Ovary (tissue), 10 donors: ENCODE measurements at regions of chr15 and their contacts with region 1.

Region 1: DNA sequence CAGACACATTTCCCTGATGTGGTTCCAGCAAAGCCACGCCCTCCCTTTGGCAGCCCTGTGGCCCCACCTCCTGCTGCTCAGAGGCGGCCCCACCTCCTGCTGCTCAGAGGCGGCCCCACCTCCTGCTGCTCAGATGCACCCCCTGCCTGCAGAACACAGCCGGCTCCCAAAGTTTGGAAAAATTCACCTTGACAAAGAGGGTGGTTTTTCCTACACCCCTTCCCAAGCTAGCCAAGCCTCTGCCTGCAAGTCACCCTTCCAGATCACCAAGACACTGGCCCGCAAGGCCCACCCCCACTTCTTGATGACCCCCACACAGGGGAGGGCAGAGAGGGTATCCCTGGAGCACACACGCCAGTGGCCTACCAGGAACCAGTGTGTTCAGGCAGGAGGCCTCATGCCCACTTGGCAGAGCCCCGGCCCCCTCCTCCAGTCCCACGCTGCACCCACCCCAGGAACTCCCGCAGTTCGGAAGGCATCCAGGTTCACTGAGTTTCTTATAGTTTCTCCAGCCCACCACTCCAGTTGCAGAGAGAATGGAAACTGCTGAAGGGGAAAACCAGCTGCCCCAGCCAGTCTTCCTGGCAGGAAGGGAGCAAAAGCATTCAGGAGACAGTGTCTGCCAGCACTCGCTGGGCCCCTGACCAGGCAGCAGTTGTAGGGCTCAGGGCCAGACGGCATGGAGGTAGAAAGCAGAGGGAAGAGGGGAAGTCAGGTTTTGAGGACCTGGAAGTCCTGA is 2.3 kb upstream of the HAPLN3 start:
- DNase-seq: peak; percentile 81 to 95 (median 88)
- H3K4me3 ChIP-seq: no peak overlapping the region
- H3K27ac ChIP-seq: peak overlapping the region; percentile 21 to 55
- H3K4me1 ChIP-seq: peaks cover 9% of the 10 kb centered on the region
- H3K27me3 ChIP-seq: no peaks in the 10 kb centered on the region
- CTCF ChIP-seq: peak; percentile 68 to 77 (median 76)
- EP300 ChIP-seq: no peak
- POLR2A ChIP-seq: no peak

Region 2: DNA sequence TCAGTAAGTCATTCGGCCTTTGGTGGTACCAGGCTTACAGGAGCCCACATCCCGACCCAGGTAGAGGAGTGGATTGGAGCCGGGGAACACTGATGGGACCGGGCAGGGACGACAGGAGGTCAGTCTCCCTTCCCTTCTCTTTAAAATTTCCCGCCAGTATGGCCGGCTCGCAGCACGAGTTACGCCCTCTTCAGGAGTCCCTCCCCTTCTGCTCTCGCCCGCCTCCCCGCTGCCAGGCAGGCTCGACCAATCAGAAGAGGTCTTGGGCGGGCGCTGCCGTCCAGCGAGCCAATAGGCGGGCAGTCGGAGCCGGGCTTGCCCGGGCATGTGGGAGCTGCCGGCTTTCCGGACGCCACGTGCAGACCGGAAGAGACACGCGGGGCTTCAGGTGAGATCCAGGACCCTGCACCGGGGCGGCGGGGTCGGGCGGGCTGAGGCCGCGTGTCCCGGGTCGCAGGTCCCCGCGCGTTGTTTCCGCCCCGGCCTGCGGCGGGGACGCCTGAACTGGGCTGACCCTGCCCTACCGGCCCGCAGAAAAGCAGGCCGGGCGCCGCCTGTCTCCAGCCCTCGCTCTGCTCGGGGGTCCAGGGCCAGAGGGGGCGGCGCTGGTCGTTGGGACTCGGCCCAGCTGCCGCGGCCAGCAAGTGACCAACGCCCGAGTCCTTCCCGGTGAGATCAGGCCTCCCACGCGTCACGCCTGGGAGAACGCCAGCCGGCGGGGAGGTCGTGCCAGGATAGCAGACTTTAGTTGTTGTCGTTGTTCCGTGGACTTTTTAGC is 276.4 kb before region 1 on chr15 and contains the start of gene AEN:
- intact Hi-C with region 1: loop called in 3 of 4 experiments (anchors 5 to 10 kb)
- DNase-seq: peak; percentile 95 to 96 (median 95)
- H3K4me3 ChIP-seq: peak within 1 kb of the TSS; percentile 96
- H3K27ac ChIP-seq: peak within 1 kb of the TSS; percentile 65 to 88
- H3K4me1 ChIP-seq: peaks cover 4% of the 10 kb centered on the region
- H3K27me3 ChIP-seq: no peaks in the 10 kb centered on the region
- CTCF ChIP-seq: peak in 2 of 3 donors; percentile 26 to 27
- EP300 ChIP-seq: no peak
- POLR2A ChIP-seq: peak; percentile 37
- total RNA-seq, gene AEN: 11.3 to 27.1 (median 16.9) TPM

Region 3: DNA sequence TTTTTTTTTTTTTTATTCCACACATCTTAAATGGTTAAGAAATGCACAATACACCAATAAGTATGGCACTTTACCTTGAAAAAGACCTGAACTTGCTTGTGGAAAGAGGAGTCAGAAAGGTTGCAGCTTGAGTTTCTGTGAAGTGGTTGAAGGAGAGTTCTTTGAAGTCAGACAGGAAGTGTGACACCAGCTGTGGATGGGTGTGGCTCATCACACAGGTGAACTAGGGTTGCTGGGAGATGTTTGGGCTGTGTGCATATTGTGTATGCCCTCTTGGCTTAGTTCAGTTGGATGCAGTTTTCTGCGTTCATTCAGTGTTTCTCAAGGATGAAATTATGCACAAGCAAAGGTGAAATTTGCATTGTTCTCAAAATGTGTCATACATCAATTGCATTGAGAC is 270.2 kb before region 1 on chr15:
- intact Hi-C with region 1: loop called in 3 of 4 experiments (anchors 5 to 10 kb)
- DNase-seq: no peak
- H3K4me3 ChIP-seq: no peak overlapping the region
- H3K27ac ChIP-seq: no peak overlapping the region
- H3K4me1 ChIP-seq: peaks cover 2% of the 10 kb centered on the region
- H3K27me3 ChIP-seq: no peaks in the 10 kb centered on the region
- CTCF ChIP-seq: no peak
- EP300 ChIP-seq: no peak
- POLR2A ChIP-seq: no peak

Region 4: DNA sequence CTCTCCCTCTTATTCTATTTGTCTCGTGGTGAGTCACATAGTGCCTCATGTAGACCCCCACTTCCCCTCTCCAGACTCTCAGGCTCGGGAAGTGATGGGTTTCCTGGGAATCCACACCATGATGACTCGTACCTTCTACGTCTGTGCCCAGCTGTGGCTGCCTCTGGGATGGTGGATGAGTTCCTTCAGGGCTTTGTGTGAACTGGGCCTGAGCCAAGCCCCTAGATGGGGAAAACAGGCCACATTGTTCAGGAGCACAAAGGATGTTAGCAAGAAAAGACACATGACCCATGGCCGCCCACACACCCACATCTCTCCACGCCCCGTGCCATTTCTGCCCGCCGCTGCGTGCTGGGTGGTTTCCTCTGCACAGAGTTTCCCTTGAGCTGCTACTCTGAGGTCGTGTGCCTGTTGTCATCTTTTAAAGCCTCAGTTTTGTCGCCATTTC is 248.3 kb before region 1 on chr15:
- intact Hi-C with region 1: no loop called
- DNase-seq: no peak
- H3K4me3 ChIP-seq: no peak overlapping the region
- H3K27ac ChIP-seq: no peak overlapping the region
- H3K4me1 ChIP-seq: no peaks in the 10 kb centered on the region
- H3K27me3 ChIP-seq: no peaks in the 10 kb centered on the region
- CTCF ChIP-seq: no peak
- EP300 ChIP-seq: no peak
- POLR2A ChIP-seq: no peak

Region 5: DNA sequence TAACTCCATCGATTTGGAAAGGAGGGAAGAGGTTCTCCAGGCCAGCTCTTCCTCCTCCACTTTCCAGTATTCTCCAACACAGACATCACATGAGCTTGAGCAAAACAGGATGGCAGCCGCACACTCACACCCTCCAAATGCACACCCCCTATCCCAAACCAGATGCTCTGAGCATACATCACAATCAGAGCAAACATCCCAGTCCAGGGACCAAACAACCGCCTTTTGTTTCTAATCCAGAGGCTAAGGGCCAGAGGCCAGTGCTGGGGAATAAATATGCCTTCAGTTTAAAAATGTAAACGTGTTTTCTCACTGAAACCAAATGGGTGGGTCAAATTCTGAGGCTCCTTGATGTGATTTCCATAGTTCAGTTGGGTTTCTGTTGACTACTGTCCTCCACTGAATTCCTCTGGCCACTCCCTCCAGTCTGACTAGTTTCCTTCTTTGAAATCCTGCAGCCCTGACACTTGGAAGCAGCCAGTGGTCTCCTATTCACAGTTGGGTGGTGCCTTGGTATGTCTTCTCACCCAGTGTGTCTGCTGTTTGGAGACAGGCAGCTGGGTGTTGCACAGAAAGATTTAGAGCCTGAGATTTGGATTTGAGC is 34.7 kb after region 1 on chr15:
- intact Hi-C with region 1: no loop called
- DNase-seq: no peak
- H3K4me3 ChIP-seq: no peak overlapping the region
- H3K27ac ChIP-seq: no peak overlapping the region
- H3K4me1 ChIP-seq: no peaks in the 10 kb centered on the region
- H3K27me3 ChIP-seq: no peaks in the 10 kb centered on the region
- CTCF ChIP-seq: no peak
- EP300 ChIP-seq: no peak
- POLR2A ChIP-seq: no peak